KBM-7 (cell line): ENCODE measurements at regions of chr4 and their contacts with region 1.

Region 1: DNA sequence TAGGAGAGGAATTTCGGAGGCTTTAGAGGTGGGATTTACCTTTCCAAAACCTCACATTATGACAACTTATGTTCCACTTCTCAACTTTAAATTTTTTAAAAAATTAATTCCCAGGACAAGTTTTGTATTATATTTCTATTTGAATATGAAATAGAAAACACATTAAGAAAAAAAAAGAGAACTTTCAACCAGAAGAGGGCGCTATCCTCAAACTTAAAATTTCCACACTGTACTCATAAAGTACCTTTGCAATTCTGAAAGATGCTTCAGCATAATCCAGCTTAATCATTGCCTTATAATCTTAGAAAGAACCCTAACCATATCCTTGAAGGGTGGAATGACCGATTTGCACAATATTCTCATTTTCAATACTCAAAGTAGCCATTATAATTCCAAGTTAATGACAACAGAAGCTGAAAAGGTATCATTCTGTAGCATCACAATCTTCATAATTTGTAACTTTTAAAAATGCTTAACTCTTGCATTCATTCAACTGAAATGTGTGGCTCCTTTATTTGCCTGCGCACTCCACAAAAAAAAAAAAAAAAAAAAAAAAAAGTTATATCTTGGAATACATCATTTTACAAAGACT is 158.0 kb downstream of the KCNIP4 start:
- DNase-seq: peak; percentile 64

Region 2: DNA sequence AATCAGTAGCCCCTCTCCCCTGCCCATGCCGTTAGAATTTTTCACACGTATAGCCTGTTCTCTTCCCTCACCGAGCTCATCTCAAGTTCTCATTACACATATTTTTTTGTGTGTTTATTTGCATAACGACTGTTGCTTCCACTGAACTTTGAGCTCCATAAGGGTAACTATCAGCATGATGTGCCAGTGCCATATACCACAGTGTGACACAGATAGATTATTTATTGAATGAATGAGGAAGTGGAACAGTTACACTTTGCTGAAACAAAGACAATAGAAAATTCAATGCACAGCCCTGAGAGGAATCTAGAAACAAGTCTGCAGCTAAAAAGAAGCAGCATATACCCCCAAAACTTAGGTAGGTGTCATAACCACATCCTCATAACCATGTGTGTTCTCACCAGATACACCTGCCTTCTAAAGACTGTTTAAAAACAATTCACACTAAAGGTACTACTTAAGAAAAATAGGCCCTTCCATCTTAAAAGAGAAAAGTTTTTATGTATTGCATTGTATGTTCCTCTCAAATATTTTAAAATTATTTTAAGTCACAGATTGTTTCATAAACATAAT is 700.4 kb before region 1 on chr4:
- in situ Hi-C with region 1: no loop called
- DNase-seq: no peak

Region 3: GRCh38 chr4:21605006-21605405 is 185.5 kb before region 1 on chr4:
- in situ Hi-C with region 1: no loop called
- DNase-seq: no peak

Region 4: GRCh38 chr4:21656832-21657231 is 133.7 kb before region 1 on chr4:
- in situ Hi-C with region 1: no loop called
- DNase-seq: no peak

Region 5: DNA sequence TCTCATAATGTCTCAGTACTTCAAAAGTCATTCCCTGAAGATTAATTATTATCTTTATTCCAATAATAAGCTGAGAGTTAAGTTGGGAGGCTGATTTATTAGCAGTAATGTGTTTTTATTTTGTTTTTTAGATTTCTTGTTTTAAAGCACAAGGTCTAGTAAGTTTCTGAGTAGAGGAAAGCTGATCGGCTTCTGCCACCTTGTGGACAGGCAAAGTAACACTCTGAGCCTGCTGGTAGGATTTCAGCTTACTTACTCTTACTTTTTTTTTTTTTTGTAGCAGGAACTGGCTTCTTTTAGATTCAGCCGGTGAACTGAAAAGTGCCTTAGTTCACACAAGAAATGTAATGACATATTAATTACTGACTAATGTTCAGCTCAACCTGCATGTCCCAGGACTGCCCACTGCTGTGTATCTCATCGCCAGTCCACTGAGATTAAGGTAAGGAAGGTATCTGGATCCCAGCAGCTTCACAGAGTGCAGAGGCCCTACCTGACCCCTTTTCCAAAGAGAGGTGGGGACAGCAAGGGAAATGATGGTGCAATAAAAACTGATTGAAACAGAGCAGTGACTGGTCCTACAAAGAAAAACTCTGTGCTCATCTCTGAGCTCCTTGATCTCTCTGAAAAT is 598.8 kb after region 1 on chr4:
- in situ Hi-C with region 1: loop called (anchors 25 kb)
- DNase-seq: peak; percentile 70